AG04450 (cell line): ENCODE measurements at regions of chr1 and their contacts with region 1.

Region 1: GRCh38 chr1:162612606-162613400 is 19.5 kb upstream of the DDR2 start:
- DNase-seq: no peak
- H3K4me3 ChIP-seq: no peak overlapping the region
- H3K27ac ChIP-seq: no peak overlapping the region
- H3K27me3 ChIP-seq: no peaks in the 10 kb centered on the region
- CTCF ChIP-seq: no peak

Region 2: DNA sequence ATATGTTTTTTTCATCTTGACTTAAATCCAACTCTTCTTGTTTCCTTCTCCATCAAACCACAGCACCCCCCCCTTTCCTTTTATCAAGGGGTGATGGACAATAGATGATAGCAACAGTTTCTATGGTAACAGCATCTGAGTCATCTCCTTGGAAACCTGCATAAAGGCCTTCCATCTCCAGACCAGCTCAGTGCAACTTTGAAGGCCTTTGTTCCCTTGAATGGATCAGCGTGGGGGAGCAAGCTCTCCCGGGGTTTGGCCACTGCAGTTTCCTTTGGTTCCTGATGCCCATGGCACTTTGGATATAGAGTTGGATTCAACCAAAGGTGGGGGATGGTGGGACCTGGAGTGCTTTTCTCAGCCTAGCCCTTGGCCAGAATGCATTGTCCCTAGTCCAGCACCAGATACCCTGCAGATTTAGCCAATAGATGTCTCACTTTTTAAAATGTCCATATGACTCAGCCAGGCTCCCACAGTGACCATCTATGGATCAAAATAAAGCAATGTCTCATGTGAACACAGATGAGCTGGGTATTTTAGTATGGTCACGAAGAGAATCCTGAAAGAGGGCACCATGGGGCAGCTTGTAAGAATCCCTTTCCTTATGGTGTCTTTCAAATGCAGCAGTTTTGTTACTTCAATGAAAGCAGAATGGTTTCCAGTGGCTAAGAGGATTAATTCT is 363.8 kb before region 1 on chr1:
- CTCF ChIA-PET with region 1: no interaction called
- POLR2A ChIA-PET with region 1: no interaction called
- DNase-seq: no peak
- H3K4me3 ChIP-seq: no peak overlapping the region
- H3K27ac ChIP-seq: no peak overlapping the region
- H3K27me3 ChIP-seq: peaks cover 2% of the 10 kb centered on the region
- CTCF ChIP-seq: no peak

Region 3: DNA sequence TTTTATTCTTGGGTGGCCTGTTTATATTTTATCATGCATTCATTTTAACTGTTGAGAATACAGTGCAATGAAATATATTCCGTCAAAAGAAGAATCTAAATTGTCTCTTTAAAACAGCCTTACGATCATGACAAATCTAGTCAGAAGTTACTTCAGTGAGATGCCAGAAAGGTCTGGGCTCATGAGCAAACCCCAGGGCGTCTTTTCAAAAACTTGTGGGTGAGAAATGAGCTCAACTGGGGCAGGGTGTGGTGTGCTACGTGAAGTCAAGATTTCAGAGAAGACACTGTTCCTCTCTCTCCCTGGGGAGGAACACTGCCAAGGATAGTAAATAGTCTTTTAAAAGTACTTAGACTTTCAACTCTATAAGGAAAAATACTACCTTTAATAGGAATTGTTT is 64.6 kb before region 1 on chr1:
- CTCF ChIA-PET with region 1: no interaction called
- POLR2A ChIA-PET with region 1: no interaction called
- DNase-seq: no peak
- H3K4me3 ChIP-seq: no peak overlapping the region
- H3K27ac ChIP-seq: no peak overlapping the region
- H3K27me3 ChIP-seq: no peaks in the 10 kb centered on the region
- CTCF ChIP-seq: no peak

Region 4: DNA sequence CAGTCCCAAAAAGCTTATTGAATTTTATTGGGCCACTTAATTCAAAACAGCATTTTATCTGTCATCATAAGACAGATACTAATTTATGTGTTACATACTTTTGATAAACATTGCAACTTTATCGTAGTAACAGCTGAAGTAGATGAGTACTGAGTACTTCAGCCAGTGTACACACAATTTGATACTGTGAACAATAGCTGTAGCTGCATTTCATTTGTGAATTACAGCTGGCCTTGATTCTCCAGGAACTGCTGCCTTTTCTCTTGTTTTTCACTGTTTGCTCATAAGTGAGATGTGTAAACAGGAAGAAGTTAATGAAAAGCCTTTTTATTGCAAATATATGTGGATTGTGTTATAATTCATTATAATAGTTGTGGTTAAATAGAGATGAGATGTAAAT is 41.1 kb before region 1 on chr1:
- CTCF ChIA-PET with region 1: interaction called, 12 read pairs
- POLR2A ChIA-PET with region 1: no interaction called
- DNase-seq: no peak
- H3K4me3 ChIP-seq: no peak overlapping the region
- H3K27ac ChIP-seq: no peak overlapping the region
- H3K27me3 ChIP-seq: no peaks in the 10 kb centered on the region
- CTCF ChIP-seq: no peak

Region 5: DNA sequence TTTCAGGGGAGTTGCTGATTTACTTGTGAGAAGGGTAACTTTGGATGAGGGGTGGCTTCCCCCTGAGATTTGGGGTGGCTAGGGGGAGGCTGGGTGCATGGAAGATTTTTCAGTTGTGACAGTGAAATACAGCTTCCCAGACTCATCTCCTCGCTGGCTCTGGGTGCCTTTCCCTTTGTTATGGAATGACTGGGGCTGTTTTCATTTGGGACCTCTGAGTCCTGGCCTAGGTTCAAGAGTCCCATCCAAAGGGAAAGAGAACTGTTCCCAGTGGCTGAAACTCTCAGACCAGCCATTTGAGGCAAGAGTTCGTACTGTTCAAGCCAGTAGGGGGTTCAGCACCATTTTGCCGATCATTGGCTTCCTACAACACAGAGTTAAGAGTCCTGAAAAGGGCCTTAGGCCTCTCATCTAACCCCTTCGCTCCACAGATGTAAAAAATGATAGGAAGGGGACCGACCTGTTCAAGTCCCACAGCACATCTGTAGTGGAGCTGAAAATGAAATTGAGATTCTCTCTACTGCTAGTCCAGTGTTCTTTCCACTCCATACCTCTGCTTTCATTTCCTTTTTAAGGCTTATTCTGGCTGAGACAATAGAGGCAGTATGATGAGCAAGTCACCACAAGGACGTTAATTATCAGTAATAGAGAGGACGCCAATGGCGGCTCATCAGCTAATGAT is 20.4 kb after region 1 on chr1:
- CTCF ChIA-PET with region 1: interaction called, 70 read pairs
- POLR2A ChIA-PET with region 1: interaction called, 11 read pairs
- DNase-seq: no peak
- H3K4me3 ChIP-seq: peak overlapping the region; percentile 83
- H3K27ac ChIP-seq: peak overlapping the region; percentile 97
- H3K27me3 ChIP-seq: no peaks in the 10 kb centered on the region
- CTCF ChIP-seq: peak; percentile 33

Region 6: DNA sequence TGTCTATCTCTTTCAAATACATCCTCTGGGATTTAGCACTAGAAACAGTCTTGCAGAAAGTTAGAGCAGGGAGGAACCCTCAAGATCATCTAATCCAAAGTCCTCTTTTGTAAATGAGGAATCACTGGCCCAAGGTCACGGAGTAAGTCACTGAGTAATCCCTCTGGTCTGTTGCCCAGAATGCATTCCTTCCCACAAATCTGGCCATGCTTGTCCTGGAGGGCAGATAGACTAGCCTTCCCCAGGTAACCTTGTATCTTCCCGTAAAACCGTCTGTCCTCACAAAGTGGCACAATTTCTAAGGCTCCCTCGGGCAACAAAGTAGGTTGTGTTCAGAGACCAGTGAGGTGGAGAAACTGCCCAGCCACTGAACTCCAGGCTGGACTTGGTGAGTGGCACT is 65.6 kb after region 1 on chr1:
- CTCF ChIA-PET with region 1: interaction called, 16 read pairs
- POLR2A ChIA-PET with region 1: no interaction called
- DNase-seq: peak; percentile 41
- H3K4me3 ChIP-seq: no peak overlapping the region
- H3K27ac ChIP-seq: no peak overlapping the region
- H3K27me3 ChIP-seq: no peaks in the 10 kb centered on the region
- CTCF ChIP-seq: no peak

Region 7: DNA sequence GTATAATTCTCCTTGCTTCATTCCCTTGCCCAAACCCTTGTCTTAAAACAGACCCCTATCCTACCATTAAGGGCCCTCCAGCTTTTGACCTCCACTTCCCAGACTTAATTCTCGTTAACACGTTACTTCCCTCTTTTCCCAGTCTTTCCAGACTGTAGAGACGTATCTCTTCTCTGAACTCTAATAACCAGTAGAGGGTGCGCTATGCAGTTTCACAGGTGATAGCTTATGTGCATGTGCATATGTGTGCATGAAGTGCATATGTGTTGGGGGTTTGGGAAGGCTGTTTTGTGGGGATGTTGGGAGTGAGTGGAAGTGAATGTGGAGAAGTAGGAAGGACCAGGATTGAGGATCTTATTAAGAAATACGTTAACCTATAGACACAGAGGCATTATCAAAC is 326.2 kb after region 1 on chr1:
- CTCF ChIA-PET with region 1: no interaction called
- POLR2A ChIA-PET with region 1: no interaction called
- DNase-seq: no peak
- H3K4me3 ChIP-seq: no peak overlapping the region
- H3K27ac ChIP-seq: no peak overlapping the region
- H3K27me3 ChIP-seq: no peaks in the 10 kb centered on the region
- CTCF ChIP-seq: 0 out of 2 replicates have a peak, but pooled peaks have one; percentile 9